Heart left ventricle (tissue), 16 donors: ENCODE measurements at regions of chr9 and their contacts with region 1.

Region 1: DNA sequence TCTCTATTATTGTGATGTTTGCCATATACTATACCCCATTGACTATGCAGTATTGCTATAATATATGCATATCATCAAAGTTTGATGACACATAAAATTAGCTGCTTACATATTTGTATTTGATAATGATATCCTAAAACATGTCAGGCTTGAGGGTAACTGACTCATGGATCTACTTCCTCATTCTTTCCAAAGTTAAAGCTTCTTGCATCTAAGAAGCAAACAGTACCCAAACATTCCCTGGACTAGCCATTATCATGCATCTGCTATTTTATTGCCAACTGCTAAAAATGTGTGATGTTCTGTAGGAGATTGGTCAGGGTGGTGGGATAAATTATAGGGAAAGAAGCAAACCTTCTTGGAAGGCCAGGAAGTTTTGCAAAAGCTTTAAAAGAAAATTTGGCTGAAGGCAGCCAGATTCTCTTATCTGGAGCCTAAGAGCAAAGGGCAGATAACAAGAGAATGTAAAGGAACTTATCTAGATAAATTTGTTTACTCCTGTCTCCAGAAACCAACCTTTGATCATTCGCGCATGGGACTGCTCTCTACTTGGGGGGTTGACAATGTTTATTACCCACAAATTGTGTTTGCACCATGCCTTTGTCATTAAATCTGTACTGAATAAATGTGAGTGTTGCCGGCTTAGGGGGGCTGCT is 604.1 kb upstream of the TLE4 start:
- DNase-seq: no peak
- ATAC-seq: no peak
- H3K4me3 ChIP-seq: no peak overlapping the region
- H3K27ac ChIP-seq: no peak overlapping the region
- H3K4me1 ChIP-seq: no peaks in the 10 kb centered on the region
- H3K27me3 ChIP-seq: no peaks in the 10 kb centered on the region
- CTCF ChIP-seq: no peak
- POLR2A ChIP-seq: no peak

Region 2: GRCh38 chr9:79026316-79026715 is 58.6 kb after region 1 on chr9:
- intact Hi-C with region 1: loop called in 1 of 10 experiments (anchors 10 kb)
- DNase-seq: no peak
- ATAC-seq: no peak
- H3K4me3 ChIP-seq: no peak overlapping the region
- H3K27ac ChIP-seq: no peak overlapping the region
- H3K4me1 ChIP-seq: no peaks in the 10 kb centered on the region
- H3K27me3 ChIP-seq: no peaks in the 10 kb centered on the region
- CTCF ChIP-seq: no peak
- POLR2A ChIP-seq: no peak